Calu3 (cell line): ENCODE measurements at regions of chr9 and their contacts with region 1.

Region 1: DNA sequence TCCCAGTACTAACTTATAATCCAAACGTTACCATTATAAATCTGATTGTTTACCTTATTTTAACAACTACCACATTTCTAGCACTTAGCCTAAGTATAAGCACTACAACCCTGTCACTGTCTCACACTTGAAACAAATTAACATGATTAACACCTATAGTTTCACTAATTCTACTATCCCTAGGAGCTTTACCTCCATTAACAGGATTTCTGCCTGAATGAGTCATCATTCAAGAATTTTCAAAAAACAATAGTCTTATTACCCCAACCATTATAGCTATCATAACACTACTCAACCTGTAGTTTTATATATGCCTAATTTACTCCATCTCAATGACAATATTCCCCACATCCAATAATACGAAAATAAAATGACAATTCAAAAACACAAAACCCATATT is 89.6 kb downstream of the INSL6 start:
- DNase-seq: no peak
- H3K4me3 Mint-ChIP-seq: no peak overlapping the region
- H3K27ac Mint-ChIP-seq: no peak overlapping the region
- H3K4me1 Mint-ChIP-seq: no peaks in the 10 kb centered on the region
- H3K27me3 Mint-ChIP-seq: no peaks in the 10 kb centered on the region
- CTCF ChIP-seq: no peak

Region 2: GRCh38 chr9:5122116-5122910 is 26.5 kb after region 1 on chr9:
- CTCF ChIA-PET with region 1: no interaction called
- intact Hi-C with region 1: loop called (anchors 2 kb)
- DNase-seq: no peak
- H3K4me3 Mint-ChIP-seq: no peak overlapping the region
- H3K27ac Mint-ChIP-seq: no peak overlapping the region
- H3K4me1 Mint-ChIP-seq: no peaks in the 10 kb centered on the region
- H3K27me3 Mint-ChIP-seq: no peaks in the 10 kb centered on the region
- CTCF ChIP-seq: no peak

Region 3: DNA sequence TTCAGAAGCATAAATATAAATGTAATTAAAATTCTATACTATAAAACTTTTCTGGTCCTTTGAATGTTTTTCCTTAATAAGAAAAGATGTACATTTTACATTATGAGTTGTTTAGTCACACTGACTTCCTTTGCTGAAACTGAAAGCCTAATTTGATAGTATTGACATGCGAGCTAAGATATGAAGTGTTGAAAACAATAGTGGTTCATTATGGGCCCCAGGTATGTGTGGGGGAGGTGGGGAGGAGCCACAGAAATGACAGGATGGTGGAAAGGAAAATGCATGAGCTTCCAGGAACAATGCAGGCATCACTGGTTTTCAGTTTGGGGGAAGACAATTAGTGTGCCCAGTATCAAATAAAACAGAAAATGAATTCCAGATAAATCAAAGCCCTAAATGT is 279.3 kb after region 1 on chr9:
- CTCF ChIA-PET with region 1: no interaction called
- intact Hi-C with region 1: no loop called
- DNase-seq: peak; percentile 7
- H3K4me3 Mint-ChIP-seq: no peak overlapping the region
- H3K27ac Mint-ChIP-seq: no peak overlapping the region
- H3K4me1 Mint-ChIP-seq: peaks cover 9% of the 10 kb centered on the region
- H3K27me3 Mint-ChIP-seq: no peaks in the 10 kb centered on the region
- CTCF ChIP-seq: no peak